GM10248 (cell line): ENCODE measurements at regions of chr6 and their contacts with region 1.

Region 1: DNA sequence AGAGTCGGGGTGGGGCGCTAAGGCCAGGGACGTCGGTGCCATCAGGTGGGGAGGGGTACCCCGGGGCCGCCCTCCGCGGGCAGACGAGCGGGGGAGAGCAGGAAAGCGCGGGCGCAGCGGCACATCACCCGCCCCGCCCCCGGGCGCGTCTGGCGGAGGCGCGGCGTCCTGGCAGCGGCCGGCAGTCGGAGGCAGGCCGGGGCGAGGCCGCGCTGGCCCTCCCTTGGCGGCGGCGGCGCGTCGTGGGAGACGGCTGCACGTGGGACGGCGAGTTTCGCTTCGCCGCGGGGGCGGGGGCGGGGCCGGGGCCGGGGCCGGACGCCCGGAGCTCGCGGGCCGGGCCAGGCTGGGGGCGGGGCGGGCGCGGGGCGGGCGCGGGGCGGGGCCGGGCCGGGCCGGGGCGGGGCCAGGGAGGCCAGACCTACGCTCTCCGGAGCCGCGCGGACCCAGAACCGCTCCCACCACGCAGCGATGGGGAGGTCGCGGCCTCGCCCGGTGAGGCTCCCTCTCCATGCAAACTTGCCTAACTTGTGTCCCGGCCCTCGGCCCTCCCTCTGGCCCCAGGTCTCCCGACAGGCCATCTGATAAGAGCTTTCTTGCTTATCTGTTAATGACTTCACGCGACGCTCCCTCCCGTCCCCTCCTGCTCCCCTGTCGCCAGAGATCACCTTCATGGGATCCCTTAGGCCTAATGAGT is 12.5 kb downstream of the ITPR3 start:
- DNase-seq: peak; percentile 91
- CTCF ChIP-seq: no peak

Region 2: DNA sequence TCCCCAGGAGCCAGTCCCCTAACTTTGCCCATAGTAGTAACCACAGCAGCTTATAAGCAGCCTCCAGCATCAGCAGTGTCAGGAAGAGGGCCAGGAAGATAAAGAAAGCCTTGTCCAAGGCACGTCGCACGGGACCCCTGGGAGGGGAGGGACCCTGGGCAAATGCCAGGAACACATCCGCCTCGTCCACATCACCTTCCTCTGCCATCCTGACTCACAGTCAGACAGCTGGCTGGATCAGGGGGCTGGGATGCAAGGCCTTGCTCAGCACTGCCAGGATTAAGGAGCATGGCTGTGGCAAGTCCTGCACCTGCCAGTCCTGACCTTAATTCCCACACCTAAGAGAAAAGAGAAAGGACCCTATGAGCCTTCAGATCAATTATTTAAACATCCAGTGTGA is 304.6 kb before region 1 on chr6:
- CTCF ChIA-PET with region 1: no interaction called
- POLR2A ChIA-PET with region 1: no interaction called
- DNase-seq: no peak
- CTCF ChIP-seq: no peak

Region 3: DNA sequence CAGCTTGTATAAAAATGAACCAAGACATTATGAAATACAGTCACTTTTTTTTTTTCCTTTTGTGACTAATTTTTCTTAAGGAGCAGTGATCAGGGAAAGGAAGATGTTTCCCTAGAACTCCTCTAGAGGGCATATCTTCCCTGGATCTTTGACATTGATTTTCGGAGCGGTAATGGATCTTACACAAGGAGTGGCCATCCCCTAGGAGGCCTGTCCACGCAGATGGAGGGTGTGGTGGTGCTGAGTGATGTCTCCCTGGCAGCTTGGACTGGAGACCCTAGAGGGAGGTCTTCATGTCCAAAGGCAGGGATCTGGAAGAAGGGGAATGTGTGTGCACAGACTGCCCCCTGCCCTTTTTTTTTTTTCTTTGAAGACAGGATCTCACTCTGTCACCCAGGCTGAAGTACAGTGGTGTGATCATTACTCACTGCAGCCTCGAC is 249.0 kb before region 1 on chr6:
- CTCF ChIA-PET with region 1: no interaction called
- POLR2A ChIA-PET with region 1: no interaction called
- DNase-seq: no peak
- CTCF ChIP-seq: no peak

Region 4: DNA sequence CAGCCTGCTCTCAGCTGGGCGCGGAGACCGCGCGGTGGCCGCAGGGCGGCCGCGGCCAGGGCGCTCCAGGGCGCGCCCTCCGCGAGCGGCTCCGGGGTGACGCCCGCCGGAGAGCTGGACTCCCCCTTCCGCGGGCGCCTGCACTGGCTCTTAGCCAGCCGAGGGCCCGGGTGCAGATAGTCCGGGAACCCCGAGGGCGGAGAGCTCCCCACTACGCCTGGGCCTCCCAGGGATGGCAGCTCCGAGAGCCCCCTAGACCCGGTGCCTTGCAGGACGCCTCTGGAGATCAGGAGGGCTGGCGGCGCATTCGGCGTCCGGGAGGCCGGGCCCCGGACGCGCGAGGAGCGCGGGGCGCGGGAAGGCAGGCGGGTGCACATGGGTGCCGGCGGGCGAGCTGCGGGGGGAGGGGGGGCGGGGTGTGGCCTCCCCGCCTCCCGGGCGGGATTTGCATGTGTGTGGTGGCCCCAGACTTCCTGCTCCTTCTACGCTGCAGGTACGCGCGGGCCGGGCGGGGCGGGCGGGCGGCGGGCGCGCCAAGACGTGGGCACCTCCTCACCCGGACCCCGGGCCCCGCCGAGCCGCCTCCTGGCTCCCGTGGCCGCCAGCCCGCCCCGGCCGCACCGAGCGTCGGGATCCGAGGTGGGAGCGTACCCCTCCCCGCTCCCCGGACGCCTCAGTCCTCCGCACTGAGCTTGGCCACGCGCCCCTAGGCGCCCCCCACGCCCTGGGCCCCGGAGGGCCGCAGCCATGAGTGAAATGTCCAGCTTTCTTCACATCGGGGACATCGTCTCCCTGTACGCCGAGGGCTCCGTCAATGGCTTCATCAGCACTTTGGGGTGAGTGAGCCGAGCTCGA is 12.5 kb before region 1 on chr6 and contains the start of gene ITPR3:
- CTCF ChIA-PET with region 1: interaction called, 25 read pairs
- POLR2A ChIA-PET with region 1: interaction called, 4 read pairs
- DNase-seq: peak; percentile 97
- CTCF ChIP-seq: no peak